Common myeloid progenitor, CD34-positive (primary cell): ENCODE measurements at regions of chr11 and their contacts with region 1.

Region 1: GRCh38 chr11:11946180-11946579 is 62.2 kb downstream of the DKK3 start:
- DNase-seq: no peak
- H3K4me3 ChIP-seq: no peak overlapping the region
- H3K27ac ChIP-seq: no peak overlapping the region
- H3K4me1 ChIP-seq: no peaks in the 10 kb centered on the region
- H3K27me3 ChIP-seq: no peaks in the 10 kb centered on the region

Region 2: GRCh38 chr11:11958403-11959231 is 12.4 kb after region 1 on chr11:
- CTCF ChIA-PET with region 1: interaction called, 10 read pairs
- POLR2A ChIA-PET with region 1: no interaction called
- DNase-seq: no peak
- H3K4me3 ChIP-seq: no peak overlapping the region
- H3K27ac ChIP-seq: no peak overlapping the region
- H3K4me1 ChIP-seq: peaks cover 0 to 11% (median 10%) of the 10 kb centered on the region in 4 experiments
- H3K27me3 ChIP-seq: peaks cover 0 to 13% (median under 1%) of the 10 kb centered on the region in 5 experiments